Vagina (tissue), 2 donors: ENCODE measurements at regions of chr14 and their contacts with region 1.

Region 1: GRCh38 chr14:52954346-52955214 is 3.7 kb upstream of the FERMT2 start:
- DNase-seq: no peak
- H3K4me3 ChIP-seq: no peak overlapping the region
- H3K27ac ChIP-seq: peak overlapping the region; percentile 6
- H3K4me1 ChIP-seq: peaks cover 5% of the 10 kb centered on the region
- H3K27me3 ChIP-seq: no peaks in the 10 kb centered on the region
- CTCF ChIP-seq: no peak
- POLR2A ChIP-seq: no peak

Region 2: DNA sequence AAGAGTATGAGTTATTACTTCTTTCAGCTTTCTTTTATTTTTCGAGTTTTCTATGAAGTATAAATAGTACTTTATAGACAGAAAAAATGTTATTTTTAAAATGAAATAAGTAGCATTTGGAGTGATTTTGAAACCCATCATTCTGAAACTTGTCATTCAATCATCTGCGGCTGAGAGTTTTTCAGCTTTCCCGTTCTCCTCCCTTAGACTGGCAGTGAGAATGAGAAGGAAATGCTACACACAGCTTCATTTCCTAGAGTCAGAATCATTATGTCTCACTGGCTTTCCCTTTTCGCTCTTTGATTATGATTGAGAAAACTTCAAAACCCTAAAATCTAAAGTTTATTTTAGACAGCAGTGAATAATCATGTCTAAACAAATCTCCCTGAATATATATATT is 129.5 kb before region 1 on chr14:
- intact Hi-C with region 1: loop called (anchors 5 kb)
- DNase-seq: no peak
- H3K4me3 ChIP-seq: no peak overlapping the region
- H3K27ac ChIP-seq: no peak overlapping the region
- H3K4me1 ChIP-seq: peaks cover 5% of the 10 kb centered on the region
- H3K27me3 ChIP-seq: no peaks in the 10 kb centered on the region
- CTCF ChIP-seq: no peak
- POLR2A ChIP-seq: no peak

Region 3: DNA sequence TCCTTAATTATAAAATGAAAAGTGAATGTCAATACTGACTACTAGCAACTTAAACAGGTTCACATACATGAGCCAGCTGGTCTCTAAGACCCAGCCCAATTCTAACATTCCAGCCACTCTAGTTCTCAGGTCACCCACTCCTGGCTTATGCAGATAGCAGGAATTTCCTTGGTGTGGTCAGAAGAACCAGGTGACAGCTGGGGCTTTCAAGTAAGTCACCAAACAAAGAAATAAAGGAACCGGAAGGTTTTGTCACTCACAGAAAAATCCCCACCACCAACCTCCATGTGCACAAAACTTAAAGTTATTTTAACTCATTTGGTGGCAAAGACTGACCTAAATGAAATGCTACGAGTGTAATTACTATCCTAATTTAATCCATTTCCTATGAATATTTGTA is 1312.6 kb after region 1 on chr14:
- intact Hi-C with region 1: no loop called
- DNase-seq: no peak
- H3K4me3 ChIP-seq: no peak overlapping the region
- H3K27ac ChIP-seq: no peak overlapping the region
- H3K4me1 ChIP-seq: no peaks in the 10 kb centered on the region
- H3K27me3 ChIP-seq: no peaks in the 10 kb centered on the region
- CTCF ChIP-seq: no peak
- POLR2A ChIP-seq: no peak